ENCODE measurements at regions of chr2 and their contacts with region 1.

Region 1: DNA sequence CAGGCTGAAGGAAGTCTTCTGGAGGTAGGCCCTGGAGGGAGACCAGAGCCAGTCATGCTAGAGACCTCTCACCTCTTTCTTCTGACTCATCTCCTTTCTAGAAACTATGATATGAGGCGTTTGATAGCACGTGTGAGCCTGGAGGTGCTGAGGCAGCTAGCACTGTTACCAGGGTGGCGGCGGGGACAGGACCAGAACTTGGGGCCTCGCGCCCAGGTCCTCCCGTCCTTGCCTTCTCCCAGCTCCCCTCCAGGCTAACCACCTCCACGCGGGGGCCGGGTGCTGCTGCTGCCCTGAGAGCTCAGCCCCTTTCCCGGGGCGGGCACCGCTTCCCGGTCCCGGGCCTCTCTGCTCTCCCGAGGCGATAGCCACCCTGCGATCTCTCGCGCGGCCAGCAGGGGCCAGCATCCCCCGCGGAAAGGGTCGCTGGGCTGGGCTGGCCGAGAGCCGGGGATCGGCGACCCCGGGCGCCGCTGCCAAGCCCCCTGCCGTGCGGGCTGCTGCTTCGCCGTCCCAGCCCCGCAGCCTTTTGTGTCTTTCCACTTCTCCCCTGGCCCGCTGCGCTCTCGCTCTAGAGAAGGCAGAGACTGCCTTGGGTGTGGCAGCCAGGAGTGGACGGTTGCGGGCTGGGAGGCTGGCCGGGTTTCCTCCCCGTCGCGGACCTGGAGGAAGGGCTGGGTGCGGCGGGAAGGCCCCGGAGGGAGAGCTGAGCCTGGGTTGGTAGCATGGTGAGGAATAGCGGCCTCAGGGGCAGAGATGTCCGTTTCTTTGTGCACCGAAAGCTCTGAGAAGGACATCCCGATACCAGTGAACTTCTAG is 49.1 kb downstream of the TMEM17 start:
- DNase-seq: peak; percentile 70
- H3K4me3 Mint-ChIP-seq: peak overlapping the region; percentile 66
- H3K27ac Mint-ChIP-seq: peak overlapping the region; percentile 57
- H3K4me1 Mint-ChIP-seq: peaks cover 10% of the 10 kb centered on the region
- H3K27me3 Mint-ChIP-seq: no peaks in the 10 kb centered on the region
- CTCF ChIP-seq: peak; percentile 98

Region 2: DNA sequence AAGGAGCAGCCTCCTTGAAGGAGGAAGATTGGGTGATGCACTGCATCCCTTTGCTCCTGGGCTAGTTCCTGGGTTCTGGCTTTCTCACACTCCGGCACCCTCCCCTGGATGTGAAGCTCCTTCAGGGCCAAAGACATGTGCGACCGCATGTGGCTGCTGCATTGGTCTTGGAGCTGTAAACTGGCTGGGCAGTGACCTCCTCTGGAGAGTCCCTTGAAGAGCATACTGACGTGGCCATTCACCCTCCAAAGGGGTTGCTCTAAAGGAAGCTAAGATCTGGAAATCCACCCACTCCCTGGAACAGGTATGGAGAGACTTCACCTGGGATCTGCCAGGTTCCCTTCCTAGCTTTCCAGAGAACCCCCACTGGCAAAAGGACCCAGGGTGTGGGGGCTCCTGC is 13.0 kb before region 1 on chr2:
- CTCF ChIA-PET with region 1: interaction called, 19 read pairs
- POLR2A ChIA-PET with region 1: interaction called, 5 read pairs
- intact Hi-C with region 1: no loop called
- DNase-seq: no peak
- H3K4me3 Mint-ChIP-seq: no peak overlapping the region
- H3K27ac Mint-ChIP-seq: no peak overlapping the region
- H3K4me1 Mint-ChIP-seq: peaks cover 5% of the 10 kb centered on the region
- H3K27me3 Mint-ChIP-seq: no peaks in the 10 kb centered on the region
- CTCF ChIP-seq: no peak

Region 3: GRCh38 chr2:62489162-62489561 is 32.2 kb after region 1 on chr2:
- CTCF ChIA-PET with region 1: interaction called, 18 read pairs
- POLR2A ChIA-PET with region 1: interaction called, 4 read pairs
- intact Hi-C with region 1: no loop called
- DNase-seq: no peak
- H3K4me3 Mint-ChIP-seq: no peak overlapping the region
- H3K27ac Mint-ChIP-seq: no peak overlapping the region
- H3K4me1 Mint-ChIP-seq: peaks cover 9% of the 10 kb centered on the region
- H3K27me3 Mint-ChIP-seq: no peaks in the 10 kb centered on the region
- CTCF ChIP-seq: no peak

Region 4: DNA sequence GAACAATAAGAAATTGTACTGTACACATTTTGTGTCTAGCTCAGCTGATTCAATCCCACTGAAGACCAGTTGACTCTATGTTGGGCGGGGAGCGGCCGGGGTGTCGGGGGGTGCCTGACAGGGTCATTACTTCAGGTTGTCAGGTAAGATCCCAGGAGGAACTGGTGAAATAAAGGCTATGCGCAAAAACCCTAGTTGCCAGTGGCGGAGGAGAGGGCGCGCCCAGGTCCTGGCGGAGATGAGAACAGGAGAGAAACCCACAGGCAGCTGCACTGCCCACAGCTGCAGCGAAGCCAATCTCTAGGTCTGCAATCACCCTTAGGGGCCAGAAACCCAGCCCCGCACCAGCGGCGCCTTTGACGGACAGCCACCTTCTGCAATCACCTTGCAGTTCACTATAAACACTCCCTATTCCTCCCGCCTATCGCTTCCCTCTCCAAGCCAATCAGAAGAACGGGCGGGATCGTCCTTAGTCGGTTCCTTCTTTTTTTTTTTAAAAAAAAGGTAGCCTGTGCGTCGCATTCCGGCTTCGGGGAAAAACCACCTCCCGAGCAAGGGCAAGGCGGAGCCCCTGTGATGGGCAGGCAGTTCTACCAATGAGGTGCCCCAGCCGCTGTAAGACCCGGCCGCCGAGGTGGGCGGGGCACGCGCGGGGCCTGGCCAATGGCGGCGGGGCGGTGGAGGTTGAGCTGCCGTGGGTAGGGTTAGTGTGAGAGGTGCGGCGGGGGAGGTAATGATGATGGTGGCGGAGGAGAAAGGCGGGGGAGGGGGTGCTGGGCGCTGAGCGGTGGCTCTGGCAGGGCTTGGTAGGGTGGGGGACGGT is 248.3 kb after region 1 on chr2 and contains the start of gene EHBP1:
- CTCF ChIA-PET with region 1: interaction called, 10 read pairs
- POLR2A ChIA-PET with region 1: interaction called, 5 read pairs
- intact Hi-C with region 1: loop called (anchors 1 kb)
- DNase-seq: peak; percentile 100
- H3K4me3 Mint-ChIP-seq: peak within 1 kb of the TSS; percentile 87
- H3K27ac Mint-ChIP-seq: peak within 1 kb of the TSS; percentile 78
- H3K4me1 Mint-ChIP-seq: peaks cover 30% of the 10 kb centered on the region
- H3K27me3 Mint-ChIP-seq: no peaks in the 10 kb centered on the region
- CTCF ChIP-seq: no peak
- total RNA-seq, gene EHBP1: 62.1 and 81.2 TPM in 2 replicates

Region 5: GRCh38 chr2:62787386-62787785 is 330.5 kb after region 1 on chr2:
- CTCF ChIA-PET with region 1: interaction called, 27 read pairs
- POLR2A ChIA-PET with region 1: interaction called, 4 read pairs
- intact Hi-C with region 1: no loop called
- DNase-seq: peak; percentile 55
- H3K4me3 Mint-ChIP-seq: no peak overlapping the region
- H3K27ac Mint-ChIP-seq: no peak overlapping the region
- H3K4me1 Mint-ChIP-seq: peaks cover 39% of the 10 kb centered on the region
- H3K27me3 Mint-ChIP-seq: no peaks in the 10 kb centered on the region
- CTCF ChIP-seq: peak; percentile 45

Region 6: DNA sequence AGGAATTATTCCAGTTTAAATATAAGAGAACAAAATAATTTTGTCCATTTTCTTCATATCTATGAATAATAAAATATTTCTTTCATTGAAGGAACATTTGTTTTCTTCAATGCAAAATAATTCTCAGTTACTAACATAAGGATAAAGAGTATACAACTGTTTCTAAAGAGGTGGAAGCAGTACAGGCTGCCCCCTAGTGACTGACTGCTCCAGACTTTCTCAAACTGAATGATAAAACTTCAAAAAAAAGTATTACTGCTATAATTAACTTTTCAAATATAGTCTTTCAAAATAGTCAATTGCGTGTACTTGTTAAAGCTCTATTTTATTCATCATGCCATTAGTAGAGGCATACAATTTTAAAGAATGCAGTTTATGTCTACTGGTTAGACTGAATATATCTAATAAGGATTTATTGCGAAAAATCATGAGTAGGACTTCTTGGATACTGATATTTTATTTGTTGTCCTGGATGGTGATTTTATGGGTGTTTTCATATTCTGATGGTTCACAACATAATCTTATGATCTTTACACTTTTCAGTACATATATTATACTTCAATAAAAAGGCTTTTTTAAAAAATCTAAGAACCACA is 1031.3 kb after region 1 on chr2:
- CTCF ChIA-PET with region 1: interaction called, 3 read pairs
- POLR2A ChIA-PET with region 1: no interaction called
- intact Hi-C with region 1: loop called (anchors 2 kb)
- DNase-seq: peak; percentile 46
- H3K4me3 Mint-ChIP-seq: no peak overlapping the region
- H3K27ac Mint-ChIP-seq: no peak overlapping the region
- H3K4me1 Mint-ChIP-seq: no peaks in the 10 kb centered on the region
- H3K27me3 Mint-ChIP-seq: no peaks in the 10 kb centered on the region
- CTCF ChIP-seq: peak; percentile 54

Measured in MCF 10A (cell line).